ENCODE measurements at regions of chr17 and their contacts with region 1.

Region 1: DNA sequence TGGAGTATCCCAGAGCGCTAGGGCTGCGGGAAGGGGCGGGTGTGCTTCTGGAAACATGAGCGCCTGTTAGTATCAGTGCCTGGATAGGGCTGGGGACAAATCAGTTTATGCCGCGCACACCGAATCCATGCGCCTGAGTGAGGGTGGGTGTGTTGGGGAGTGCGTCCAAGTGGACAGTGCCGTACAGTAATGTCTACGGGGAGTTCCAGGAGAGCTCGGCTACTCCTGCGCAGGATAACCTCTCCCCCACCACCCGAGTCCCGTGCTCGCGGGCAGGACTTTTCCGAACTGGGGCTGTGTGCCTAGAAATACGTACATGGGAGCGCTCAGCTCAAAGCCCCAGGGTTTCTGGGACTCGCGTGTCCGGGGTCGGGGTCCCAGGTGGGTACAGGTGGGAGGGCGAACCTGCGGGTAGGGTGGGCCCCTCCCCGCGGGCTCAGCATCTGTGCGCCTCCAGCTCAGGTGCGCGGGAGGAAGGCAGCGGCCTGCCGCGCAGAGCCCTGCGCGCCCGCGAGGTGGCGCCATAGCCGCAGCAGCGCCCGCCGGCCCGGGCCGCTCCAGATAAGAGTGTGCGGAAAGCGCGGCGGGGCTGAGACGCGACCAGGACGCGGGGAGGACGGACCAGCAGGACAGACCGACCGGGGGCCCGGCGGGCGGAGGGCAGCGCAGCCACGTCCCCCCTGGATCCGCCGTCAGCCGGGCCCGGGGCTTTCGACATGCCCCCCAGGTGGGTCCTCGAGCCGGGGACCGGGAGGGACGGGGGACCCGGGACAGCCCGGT is at the start of gene HIC1:
- DNase-seq: peak; percentile 74 to 86 (median 83)
- H3K4me3 ChIP-seq: peak within 1 kb of the TSS; percentile 47 to 63
- H3K4me3 Mint-ChIP-seq: peak within 1 kb of the TSS; percentile 79 to 91 (median 83)
- H3K27ac ChIP-seq: peak within 1 kb of the TSS; percentile 71
- H3K27ac Mint-ChIP-seq: peak within 1 kb of the TSS; percentile 87 to 96 (median 92)
- H3K4me1 ChIP-seq: peaks cover 30% of the 10 kb centered on the region
- H3K4me1 Mint-ChIP-seq: peaks cover 13 to 34% (median 21%) of the 10 kb centered on the region in 4 donors
- H3K27me3 ChIP-seq: no peaks in the 10 kb centered on the region
- H3K27me3 Mint-ChIP-seq: no peaks in the 10 kb centered on the region
- total RNA-seq, gene HIC1: 4.9 to 5.2 TPM

Region 2: GRCh38 chr17:2083613-2084128 is 29.0 kb after region 1 on chr17:
- CTCF ChIA-PET with region 1: interaction called, 42 read pairs
- POLR2A ChIA-PET with region 1: interaction called, 26 read pairs
- intact Hi-C with region 1: no loop called
- DNase-seq: no peak
- H3K4me3 ChIP-seq: no peak overlapping the region
- H3K4me3 Mint-ChIP-seq: no peak overlapping the region
- H3K27ac ChIP-seq: no peak overlapping the region
- H3K27ac Mint-ChIP-seq: peak overlapping the region in 3 of 7 donors; percentile 44 to 61 (median 52)
- H3K4me1 ChIP-seq: peaks cover 28% of the 10 kb centered on the region
- H3K4me1 Mint-ChIP-seq: peaks cover 21 to 37% (median 32%) of the 10 kb centered on the region in 4 donors
- H3K27me3 ChIP-seq: no peaks in the 10 kb centered on the region
- H3K27me3 Mint-ChIP-seq: peaks cover 0 to 1% of the 10 kb centered on the region in 2 donors

Region 3: GRCh38 chr17:2215616-2216364 is 161.1 kb after region 1 on chr17:
- CTCF ChIA-PET with region 1: interaction called, 10 read pairs
- POLR2A ChIA-PET with region 1: interaction called, 27 read pairs
- intact Hi-C with region 1: no loop called
- DNase-seq: peak; percentile 70 to 80 (median 78)
- H3K4me3 ChIP-seq: peak overlapping the region; percentile 37 to 45
- H3K4me3 Mint-ChIP-seq: peak overlapping the region; percentile 74 to 87 (median 80)
- H3K27ac ChIP-seq: peak overlapping the region; percentile 90
- H3K27ac Mint-ChIP-seq: peak overlapping the region; percentile 88 to 99 (median 96)
- H3K4me1 ChIP-seq: peaks cover 52% of the 10 kb centered on the region
- H3K4me1 Mint-ChIP-seq: peaks cover 43 to 63% (median 48%) of the 10 kb centered on the region in 4 donors
- H3K27me3 ChIP-seq: no peaks in the 10 kb centered on the region
- H3K27me3 Mint-ChIP-seq: no peaks in the 10 kb centered on the region

Region 4: DNA sequence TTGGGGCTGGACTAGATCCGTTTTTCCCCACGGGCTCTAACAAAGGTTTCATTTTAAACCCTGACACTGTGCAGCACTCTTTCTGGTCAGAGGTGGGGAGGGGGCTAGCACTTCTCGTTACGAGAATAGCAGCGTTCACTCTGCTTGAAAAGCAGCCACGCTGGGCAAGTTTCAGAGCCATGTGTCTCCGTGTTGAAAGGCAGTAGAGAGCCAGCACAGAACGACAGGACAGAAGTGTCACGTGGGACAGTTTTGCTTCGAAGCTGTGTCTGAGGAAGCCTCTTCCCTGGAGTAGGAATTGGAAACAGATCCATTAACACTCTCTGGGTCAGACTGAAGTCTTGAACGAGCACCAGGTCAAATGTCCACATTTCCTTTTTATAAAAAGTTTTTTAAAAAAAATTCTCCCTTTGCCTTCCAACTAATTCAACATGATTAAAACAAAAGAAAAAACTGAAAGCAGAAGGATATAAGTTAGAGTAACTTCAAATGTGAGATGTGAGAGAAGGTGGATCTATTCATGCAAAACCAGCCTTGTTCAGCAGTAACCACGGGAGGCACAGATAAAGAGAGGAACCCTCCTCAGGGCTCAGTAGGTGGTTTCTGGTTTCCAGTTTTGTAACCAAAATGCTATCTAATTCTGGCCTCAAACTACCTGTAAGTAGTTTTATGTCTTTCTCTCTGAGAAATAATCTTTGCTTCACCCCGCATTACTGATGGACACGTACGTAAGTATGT is 183.9 kb after region 1 on chr17:
- CTCF ChIA-PET with region 1: interaction called, 192 read pairs
- POLR2A ChIA-PET with region 1: interaction called, 18 read pairs
- intact Hi-C with region 1: no loop called
- DNase-seq: no peak
- H3K4me3 ChIP-seq: no peak overlapping the region
- H3K4me3 Mint-ChIP-seq: no peak overlapping the region
- H3K27ac ChIP-seq: no peak overlapping the region
- H3K27ac Mint-ChIP-seq: peak overlapping the region in 2 of 7 donors; percentile 30 to 37
- H3K4me1 ChIP-seq: no peaks in the 10 kb centered on the region
- H3K4me1 Mint-ChIP-seq: peaks cover 10 to 16% (median 13%) of the 10 kb centered on the region in 4 donors
- H3K27me3 ChIP-seq: no peaks in the 10 kb centered on the region
- H3K27me3 Mint-ChIP-seq: no peaks in the 10 kb centered on the region

Region 5: DNA sequence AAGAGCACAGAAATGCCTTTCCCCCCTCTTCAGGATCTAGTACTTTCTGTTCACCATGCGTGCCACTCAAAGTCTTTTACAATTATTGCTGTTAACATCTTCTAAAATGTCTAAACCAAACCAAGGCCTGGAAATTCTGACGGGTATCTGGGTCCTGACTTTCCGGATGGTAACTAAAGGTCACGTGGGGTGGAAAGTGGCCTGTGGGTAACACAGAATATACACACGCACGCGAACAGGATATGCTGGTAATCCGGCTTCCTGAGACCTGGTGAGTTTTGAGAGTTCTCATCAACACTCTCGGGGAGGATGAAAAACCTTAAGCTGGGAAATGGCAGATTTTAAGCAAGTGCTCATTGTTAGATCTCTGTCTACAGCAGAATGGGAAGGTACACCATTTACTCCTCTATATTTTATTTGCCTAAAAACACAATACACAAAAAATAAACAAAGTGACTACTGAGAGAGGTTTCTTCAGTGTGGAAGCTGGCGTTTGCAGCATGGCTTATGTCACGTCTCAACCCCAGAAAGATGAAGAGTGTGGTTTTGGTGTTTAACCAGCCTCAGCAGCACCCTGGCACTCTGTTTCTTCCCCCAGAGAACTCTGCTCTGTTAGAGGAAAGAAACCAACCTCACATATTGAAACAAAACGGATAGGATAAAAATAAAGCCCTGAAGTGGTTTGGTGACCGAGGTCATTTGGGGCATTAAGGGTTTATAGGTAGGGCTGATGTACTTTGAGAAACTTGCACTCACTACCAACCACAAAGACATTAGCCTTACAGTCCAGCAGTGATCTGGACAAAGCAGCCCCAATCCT is 211.6 kb after region 1 on chr17:
- CTCF ChIA-PET with region 1: interaction called, 49 read pairs
- POLR2A ChIA-PET with region 1: interaction called, 75 read pairs
- intact Hi-C with region 1: no loop called
- DNase-seq: peak; percentile 90 to 97 (median 91)
- H3K4me3 ChIP-seq: peak overlapping the region; percentile 13 to 26
- H3K4me3 Mint-ChIP-seq: peak overlapping the region; percentile 72 to 86 (median 85)
- H3K27ac ChIP-seq: peak overlapping the region; percentile 87
- H3K27ac Mint-ChIP-seq: peak overlapping the region; percentile 98 to 99 (median 99)
- H3K4me1 ChIP-seq: peaks cover 82% of the 10 kb centered on the region
- H3K4me1 Mint-ChIP-seq: peaks cover 52 to 86% (median 73%) of the 10 kb centered on the region in 4 donors
- H3K27me3 ChIP-seq: no peaks in the 10 kb centered on the region
- H3K27me3 Mint-ChIP-seq: no peaks in the 10 kb centered on the region

Region 6: DNA sequence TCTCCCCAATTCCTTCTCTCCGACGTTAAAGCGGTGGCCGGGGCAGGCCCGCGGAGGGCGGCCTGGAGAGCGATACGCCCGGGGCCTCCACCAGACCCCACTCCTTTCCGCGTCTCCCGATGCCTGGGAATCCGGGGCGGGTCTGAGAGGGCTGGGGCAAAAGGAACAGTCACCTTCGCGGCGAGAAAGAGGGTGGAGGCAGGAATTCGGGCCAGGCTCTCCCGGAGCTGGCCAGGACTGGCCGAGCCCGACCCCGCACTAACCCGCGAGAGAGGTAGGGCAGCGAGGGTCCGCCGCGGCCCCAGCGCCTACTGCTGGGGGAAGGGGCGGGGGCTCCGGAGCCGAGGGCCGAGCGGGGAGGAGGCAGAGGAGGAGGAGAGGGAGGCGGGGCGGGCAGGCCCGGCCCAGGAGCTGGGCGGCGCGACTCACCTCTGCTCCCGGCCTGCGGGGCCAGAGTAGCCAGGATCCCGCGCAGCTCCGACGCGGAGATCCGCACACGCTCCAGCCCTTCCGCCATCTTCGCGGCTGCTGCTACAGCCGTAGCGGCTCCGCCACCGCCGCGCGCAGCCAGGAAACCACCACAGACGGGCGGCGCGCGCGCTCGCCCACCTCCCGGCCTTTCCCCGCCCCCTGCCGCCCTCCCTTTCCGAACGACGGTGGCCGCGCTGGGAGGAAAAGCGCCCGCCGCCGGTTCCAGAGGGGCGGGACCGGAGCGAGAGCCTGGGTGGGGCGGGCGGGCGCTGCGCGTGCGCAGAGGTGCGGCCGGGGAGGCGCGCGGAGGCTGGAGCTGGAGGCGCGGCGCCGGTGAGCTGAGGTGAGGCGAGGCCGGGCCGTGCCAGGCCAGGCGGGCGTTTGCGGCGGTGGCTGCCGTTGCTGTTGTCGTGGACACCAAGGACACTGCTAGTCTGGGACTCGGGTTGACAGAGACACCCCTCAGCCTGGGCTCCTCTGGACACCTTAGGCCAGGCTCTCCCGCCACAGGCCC is 248.8 kb after region 1 on chr17 and contains the starts of genes SMG6 and SRR:
- CTCF ChIA-PET with region 1: interaction called, 9 read pairs
- POLR2A ChIA-PET with region 1: interaction called, 20 read pairs
- intact Hi-C with region 1: loop called (anchors 1 kb)
- DNase-seq: peak; percentile 93 to 94 (median 93)
- H3K4me3 ChIP-seq: peak within 1 kb of the TSS; percentile 84 to 94
- H3K4me3 Mint-ChIP-seq: peak within 1 kb of the TSS; percentile 92 to 95 (median 93)
- H3K27ac ChIP-seq: peak within 1 kb of the TSS; percentile 88
- H3K27ac Mint-ChIP-seq: peak within 1 kb of the TSS; percentile 90 to 93 (median 91)
- H3K4me1 ChIP-seq: peaks cover 26% of the 10 kb centered on the region
- H3K4me1 Mint-ChIP-seq: peaks cover 24 to 59% (median 41%) of the 10 kb centered on the region in 4 donors
- H3K27me3 ChIP-seq: no peaks in the 10 kb centered on the region
- H3K27me3 Mint-ChIP-seq: no peaks in the 10 kb centered on the region
- total RNA-seq, gene SMG6: 51.1 to 58.5 TPM
- total RNA-seq, gene SRR: 6.9 to 13.1 TPM

Region 7: DNA sequence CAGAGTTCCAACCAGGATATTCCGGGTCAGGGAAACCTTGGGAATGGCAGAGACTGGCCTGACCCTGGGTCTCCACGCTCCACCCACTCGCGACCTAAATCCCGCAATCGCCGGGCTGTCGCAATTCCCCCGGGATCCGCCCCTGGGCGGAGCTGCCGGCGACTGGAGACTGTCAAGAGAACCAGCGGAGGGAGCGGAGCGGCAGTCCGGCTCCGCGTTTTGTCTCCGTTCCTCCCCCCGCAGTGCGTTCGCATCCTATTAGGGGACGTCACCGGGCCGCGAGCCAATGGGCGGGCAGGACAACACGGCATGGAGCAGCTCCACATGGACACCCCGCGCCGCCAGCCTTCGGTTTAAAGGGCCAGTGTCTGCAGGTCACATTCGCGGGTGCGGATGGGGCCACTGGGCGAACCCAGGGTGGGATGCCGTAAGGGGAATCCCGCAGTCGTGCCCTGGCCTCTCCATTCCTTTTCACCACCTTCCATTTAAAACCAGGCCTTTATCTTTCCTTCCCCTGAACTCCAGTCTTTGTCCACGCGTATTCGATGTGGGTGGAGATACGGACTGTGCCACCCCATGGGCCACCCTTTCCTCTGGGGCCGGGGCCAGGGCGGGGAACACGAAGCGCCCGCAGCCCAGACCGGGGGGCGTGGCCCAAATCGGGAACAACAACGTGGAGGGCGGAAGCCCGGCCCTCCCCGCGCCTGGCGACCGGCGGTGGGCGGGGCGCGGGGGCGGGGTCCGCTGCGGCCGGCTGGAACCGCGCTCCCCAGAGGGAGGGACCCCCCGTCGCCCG is 346.9 kb after region 1 on chr17:
- CTCF ChIA-PET with region 1: no interaction called
- POLR2A ChIA-PET with region 1: no interaction called
- intact Hi-C with region 1: loop called (anchors 1 kb)
- DNase-seq: peak; percentile 99 to 100 (median 100)
- H3K4me3 ChIP-seq: peak overlapping the region; percentile 65 to 89
- H3K4me3 Mint-ChIP-seq: peak overlapping the region; percentile 90 to 100 (median 98)
- H3K27ac ChIP-seq: peak overlapping the region; percentile 95
- H3K27ac Mint-ChIP-seq: peak overlapping the region; percentile 99 to 100 (median 100)
- H3K4me1 ChIP-seq: peaks cover 35% of the 10 kb centered on the region
- H3K4me1 Mint-ChIP-seq: peaks cover 18 to 54% (median 33%) of the 10 kb centered on the region in 4 donors
- H3K27me3 ChIP-seq: no peaks in the 10 kb centered on the region
- H3K27me3 Mint-ChIP-seq: peaks cover 0 to 8% of the 10 kb centered on the region in 2 donors

Measured in CD4-positive, alpha-beta memory T cell (primary cell).